ENCODE measurements at regions of chr11 and their contacts with region 1.

Region 1: DNA sequence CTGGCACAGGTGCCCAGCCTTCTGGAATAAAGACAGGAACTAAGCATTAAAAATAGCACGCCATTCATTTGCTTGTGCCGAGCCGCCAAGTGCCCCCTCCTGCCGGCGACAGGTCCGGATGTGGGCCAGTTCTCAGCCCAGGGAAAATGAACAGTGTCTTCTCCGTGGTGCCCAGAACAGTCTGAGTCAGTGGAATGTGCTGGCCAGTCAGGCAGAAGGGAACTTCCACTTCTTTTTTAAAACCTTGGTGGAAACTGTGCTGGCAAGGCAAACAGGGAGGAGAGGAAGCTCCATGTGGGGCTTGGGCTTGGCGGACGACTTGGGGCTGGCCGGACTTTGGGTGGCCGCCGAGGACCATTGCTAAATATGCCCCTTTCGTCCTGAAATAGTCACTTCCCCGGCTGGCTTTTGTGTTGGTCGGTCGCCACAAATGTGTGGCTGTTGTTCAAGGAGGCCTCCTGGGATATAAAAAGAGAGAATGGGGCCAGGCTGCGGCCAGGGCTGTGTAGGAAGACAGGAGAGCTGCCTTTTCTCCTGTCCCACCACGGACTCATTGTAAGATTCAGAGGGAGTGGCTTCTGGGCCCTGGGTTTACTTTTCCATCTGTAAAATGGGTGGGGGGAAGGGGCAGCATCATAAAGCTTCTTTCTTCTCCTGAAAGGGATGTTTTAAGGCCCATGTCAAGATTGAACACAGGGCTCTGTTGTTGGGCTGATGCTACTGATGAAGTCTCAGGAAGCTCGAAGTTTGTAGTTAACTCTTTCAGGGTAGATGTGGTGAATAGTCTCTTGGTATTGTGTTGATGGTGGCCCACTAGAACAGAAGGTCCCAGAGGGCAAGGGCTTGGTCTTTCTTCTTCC is 101.0 kb downstream of the PTPRJ start:
- DNase-seq: peak; percentile 69 to 76
- ATAC-seq: peak; percentile 94 to 99 (median 96)
- H3K4me3 ChIP-seq: peak overlapping the region in 6 of 10 donors; percentile 14 to 31 (median 28)
- H3K27ac ChIP-seq: peak overlapping the region; percentile 41 to 90 (median 78)
- H3K4me1 ChIP-seq: peaks cover 0 to 54% (median 25%) of the 10 kb centered on the region in 9 donors
- H3K27me3 ChIP-seq: no peaks in the 10 kb centered on the region
- CTCF ChIP-seq: peak in 2 of 9 donors; percentile 5 to 17

Region 2: GRCh38 chr11:48001438-48002021 is 79.9 kb before region 1 on chr11:
- intact Hi-C with region 1: loop called in 1 of 10 experiments (anchors 5 kb)
- DNase-seq: no peak
- ATAC-seq: peak in 5 of 8 donors; percentile 26 to 64 (median 41)
- H3K4me3 ChIP-seq: no peak overlapping the region
- H3K27ac ChIP-seq: peak overlapping the region in 2 of 10 donors; percentile 13 to 85
- H3K4me1 ChIP-seq: peaks cover 0 to 85% (median 33%) of the 10 kb centered on the region in 9 donors
- H3K27me3 ChIP-seq: no peaks in the 10 kb centered on the region
- CTCF ChIP-seq: no peak

Region 3: GRCh38 chr11:48013269-48013901 is 68.0 kb before region 1 on chr11:
- intact Hi-C with region 1: loop called in 1 of 10 experiments (anchors 10 kb)
- DNase-seq: no peak
- ATAC-seq: peak in 7 of 8 donors; percentile 23 to 77 (median 63)
- H3K4me3 ChIP-seq: no peak overlapping the region
- H3K27ac ChIP-seq: peak overlapping the region in 2 of 10 donors; percentile 9 to 81
- H3K4me1 ChIP-seq: peaks cover 0 to 100% (median 8%) of the 10 kb centered on the region in 9 donors
- H3K27me3 ChIP-seq: no peaks in the 10 kb centered on the region
- CTCF ChIP-seq: no peak

Region 4: DNA sequence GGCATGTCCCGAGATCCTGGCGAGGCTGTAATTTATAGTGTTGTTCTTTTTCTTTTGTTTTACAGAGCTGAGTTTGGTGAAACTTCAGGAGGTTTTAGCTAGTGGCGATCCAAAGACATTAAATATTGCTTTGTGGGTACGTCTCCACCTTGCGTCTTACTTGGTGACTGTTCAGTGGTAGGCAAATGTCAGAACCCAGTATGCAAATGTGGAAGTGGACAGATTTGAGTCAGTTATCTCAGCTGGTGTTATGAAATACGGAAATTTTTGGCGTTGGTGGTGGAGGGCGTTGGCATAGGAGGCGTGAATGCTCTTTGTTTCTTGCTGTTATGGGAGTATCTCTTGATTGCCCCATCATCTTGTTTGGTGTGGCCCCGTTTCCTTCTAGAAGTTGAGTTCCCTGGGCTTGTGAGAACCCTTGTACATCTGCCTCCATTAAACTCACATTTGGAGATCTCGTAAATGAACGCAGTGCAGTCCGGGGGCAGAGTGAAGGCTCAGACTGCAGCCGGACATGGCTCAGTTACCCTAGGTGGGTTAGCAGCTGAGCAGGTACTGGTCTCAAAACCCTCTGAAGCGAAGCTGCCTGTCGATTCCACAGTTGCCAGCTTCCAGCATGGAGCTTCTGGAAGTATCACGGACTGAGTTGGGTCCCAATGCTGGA is 61.2 kb before region 1 on chr11:
- intact Hi-C with region 1: loop called in 2 of 10 experiments (anchors 10 kb)
- DNase-seq: no peak
- ATAC-seq: peak in 7 of 8 donors; percentile 25 to 55 (median 45)
- H3K4me3 ChIP-seq: no peak overlapping the region
- H3K27ac ChIP-seq: peak overlapping the region in 2 of 10 donors; percentile 35 to 81
- H3K4me1 ChIP-seq: peaks cover 0 to 86% (median 0%) of the 10 kb centered on the region in 9 donors
- H3K27me3 ChIP-seq: no peaks in the 10 kb centered on the region
- CTCF ChIP-seq: peak in 1 of 9 donors; percentile 22

Region 5: GRCh38 chr11:48043111-48043990 is 38.0 kb before region 1 on chr11:
- intact Hi-C with region 1: no loop called
- DNase-seq: no peak
- ATAC-seq: peak in 1 of 8 donors; percentile 44
- H3K4me3 ChIP-seq: no peak overlapping the region
- H3K27ac ChIP-seq: peak overlapping the region in 1 of 10 donors; percentile 73
- H3K4me1 ChIP-seq: peaks cover 0 to 64% (median 0%) of the 10 kb centered on the region in 9 donors
- H3K27me3 ChIP-seq: no peaks in the 10 kb centered on the region
- CTCF ChIP-seq: no peak

Measured in heart right ventricle (tissue), 16 donors.